ENCODE measurements at regions of chr3 and their contacts with region 1.

Region 1: GRCh38 chr3:158644345-158644908 is at the start of gene GFM1:
- DNase-seq: peak; percentile 94
- H3K4me3 ChIP-seq: peak within 1 kb of the TSS; percentile 89
- H3K27ac ChIP-seq: peak within 1 kb of the TSS; percentile 43
- H3K4me1 ChIP-seq: peaks cover 13% of the 10 kb centered on the region
- CTCF ChIP-seq: peak; percentile 77
- total RNA-seq, gene GFM1: 29.4 and 36.5 TPM in 2 replicates

Region 2: GRCh38 chr3:158295771-158296170 is 348.7 kb before region 1 on chr3:
- CTCF ChIA-PET with region 1: no interaction called
- POLR2A ChIA-PET with region 1: no interaction called
- intact Hi-C with region 1: no loop called
- DNase-seq: no peak
- H3K4me3 ChIP-seq: no peak overlapping the region
- H3K27ac ChIP-seq: no peak overlapping the region
- H3K4me1 ChIP-seq: no peaks in the 10 kb centered on the region
- CTCF ChIP-seq: no peak

Region 3: DNA sequence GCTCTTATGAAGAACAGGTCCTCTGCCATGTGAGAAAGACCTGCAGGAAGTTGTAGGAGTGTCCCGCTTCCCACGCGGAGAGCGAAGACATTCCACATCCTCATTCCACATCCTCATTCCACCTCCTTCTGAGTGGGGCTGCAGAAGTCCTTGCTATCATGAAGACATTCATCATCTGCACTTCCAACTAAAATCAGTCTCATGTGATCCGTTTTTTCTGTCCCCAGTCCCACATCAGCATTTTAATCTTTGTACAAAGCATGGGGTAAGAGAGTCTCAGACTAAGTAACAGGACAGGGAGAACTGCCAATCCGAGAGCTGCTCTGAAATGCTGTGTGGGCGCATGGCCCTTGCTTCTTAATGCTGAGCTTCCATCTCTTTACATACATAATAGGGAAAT is 307.3 kb before region 1 on chr3:
- CTCF ChIA-PET with region 1: no interaction called
- POLR2A ChIA-PET with region 1: no interaction called
- intact Hi-C with region 1: no loop called
- DNase-seq: no peak
- H3K4me3 ChIP-seq: no peak overlapping the region
- H3K27ac ChIP-seq: no peak overlapping the region
- H3K4me1 ChIP-seq: no peaks in the 10 kb centered on the region
- CTCF ChIP-seq: no peak

Region 4: DNA sequence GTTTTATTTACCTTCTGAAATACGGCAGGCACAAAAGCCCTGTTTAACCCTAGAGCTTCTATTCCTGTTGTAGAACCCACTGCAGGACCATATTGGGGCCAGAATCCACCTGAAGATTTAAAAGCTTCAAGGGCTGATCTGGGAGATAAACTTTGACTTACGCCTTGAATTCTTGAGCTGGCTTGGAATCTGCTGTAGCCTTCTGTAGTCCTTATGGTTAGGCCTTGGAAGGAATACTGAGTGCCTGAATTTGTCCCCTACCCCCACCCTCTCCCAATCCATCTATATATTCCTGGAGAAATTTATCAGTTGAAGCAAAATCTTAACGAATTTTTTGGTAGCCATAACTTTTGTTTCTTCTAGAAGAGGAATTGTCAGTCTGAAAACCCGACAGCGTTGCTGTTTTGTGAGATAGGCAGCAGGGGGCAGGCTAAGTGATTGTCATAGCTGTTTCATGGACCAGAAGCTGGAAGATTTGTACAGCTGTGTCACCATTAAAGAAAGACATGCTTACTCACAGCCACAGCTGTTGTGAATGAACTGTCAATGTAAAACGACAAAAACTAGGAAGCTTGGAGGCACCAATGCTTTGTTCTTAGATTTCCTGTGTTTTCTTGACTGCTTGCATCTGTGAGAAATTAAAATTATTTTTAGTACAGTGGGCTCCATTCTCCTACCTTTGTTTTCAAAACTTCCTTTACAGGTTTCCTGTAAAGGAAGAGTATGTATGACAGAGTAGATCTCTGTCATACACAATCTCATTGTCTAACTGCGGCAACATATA is 15.2 kb after region 1 on chr3:
- CTCF ChIA-PET with region 1: interaction called, 10 read pairs
- POLR2A ChIA-PET with region 1: interaction called, 30 read pairs
- intact Hi-C with region 1: no loop called
- DNase-seq: peak; percentile 51
- H3K4me3 ChIP-seq: no peak overlapping the region
- H3K27ac ChIP-seq: no peak overlapping the region
- H3K4me1 ChIP-seq: no peaks in the 10 kb centered on the region
- CTCF ChIP-seq: peak; percentile 85

Region 5: DNA sequence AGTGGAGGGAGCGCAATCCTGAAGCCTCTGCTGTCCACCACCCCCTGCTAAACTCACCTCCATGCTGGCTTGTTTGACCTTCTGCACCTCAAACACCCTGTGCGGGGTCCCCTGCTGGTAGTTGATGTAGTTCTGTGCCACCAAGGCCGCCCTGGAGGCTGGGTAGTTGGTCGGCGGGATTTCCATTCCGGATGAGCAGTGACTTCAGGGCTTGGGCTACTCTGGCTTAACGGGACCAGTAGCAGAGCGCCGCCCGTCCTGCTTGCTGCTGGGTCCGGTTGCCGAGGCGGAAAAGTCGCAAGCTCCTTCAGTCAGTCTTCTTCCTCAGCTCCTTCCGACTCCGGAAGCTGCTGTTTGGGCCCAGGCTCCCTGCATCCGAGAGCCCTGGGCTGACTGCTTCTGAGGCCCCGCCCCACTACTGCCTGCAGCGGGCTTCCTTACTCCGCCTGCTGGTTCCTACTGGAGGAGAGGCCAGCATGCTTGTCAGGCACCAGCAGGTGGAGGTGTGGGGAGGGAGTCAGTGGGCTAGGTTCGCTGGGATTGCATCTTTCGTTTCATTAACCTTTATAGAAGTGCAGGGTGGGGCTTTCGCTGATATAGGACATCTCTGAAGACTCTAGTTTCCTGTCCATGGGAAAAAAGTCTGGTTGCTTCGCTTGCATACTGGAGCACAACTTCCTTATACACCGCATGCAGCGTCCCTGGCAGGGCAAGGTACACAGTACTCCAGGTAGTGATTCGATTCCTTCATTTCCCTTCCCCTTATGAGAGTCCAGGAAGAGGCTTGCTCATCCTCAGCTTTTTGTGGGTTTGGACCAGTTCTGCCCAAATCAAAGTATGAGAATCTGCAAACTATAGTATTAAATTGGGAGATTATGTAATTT is 28.1 kb after region 1 on chr3 and contains the start of gene LXN:
- CTCF ChIA-PET with region 1: interaction called, 5 read pairs
- POLR2A ChIA-PET with region 1: interaction called, 11 read pairs
- intact Hi-C with region 1: no loop called
- DNase-seq: peak; percentile 82
- H3K4me3 ChIP-seq: peak within 1 kb of the TSS; percentile 75
- H3K27ac ChIP-seq: peak within 1 kb of the TSS; percentile 54
- H3K4me1 ChIP-seq: peaks cover 7% of the 10 kb centered on the region
- CTCF ChIP-seq: peak; percentile 63
- total RNA-seq, gene LXN: 9.0 and 10.9 TPM in 2 replicates

Measured in OCI-LY7 (cell line).